Activated CD8-positive, alpha-beta T cell treated with anti-CD3 and anti-CD28 coated beads for 36 hours (primary cell): ENCODE measurements at regions of chr2 and their contacts with region 1.

Region 1: DNA sequence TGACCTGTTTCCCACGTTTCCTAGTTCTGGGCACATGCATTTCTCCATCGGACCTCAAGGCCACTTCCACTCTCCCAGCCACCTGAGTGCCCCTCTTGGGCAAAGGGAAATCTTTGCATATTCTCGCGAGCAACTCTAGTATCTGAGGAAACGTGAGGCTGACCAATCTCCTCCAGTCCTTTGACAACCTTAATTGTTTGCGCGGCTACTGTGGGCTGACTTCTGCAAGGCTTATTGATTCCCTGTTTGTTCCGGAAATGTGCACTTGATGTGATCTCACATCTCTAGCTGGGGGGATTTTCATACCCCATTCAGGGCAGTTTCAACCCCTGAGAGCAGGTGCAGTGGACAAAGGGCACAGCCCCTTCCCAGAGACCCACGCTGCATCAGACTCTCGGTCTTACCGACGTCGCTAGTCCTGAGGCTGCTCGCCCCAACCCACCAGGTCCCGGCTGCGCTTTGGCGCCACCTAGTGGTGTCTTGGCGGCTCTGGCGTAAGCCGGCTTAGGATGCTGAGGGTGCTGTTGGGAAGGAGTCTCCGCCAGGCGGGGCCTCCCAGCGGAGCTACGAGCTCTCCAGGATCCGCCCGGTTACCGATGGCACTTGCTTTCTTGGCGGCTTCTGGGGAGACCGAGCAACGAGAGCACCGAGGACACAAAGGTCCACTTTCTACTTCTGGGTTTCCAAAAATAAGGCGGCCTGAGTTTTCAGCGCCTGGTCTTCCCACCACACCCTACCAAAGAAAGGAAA is 24.8 kb upstream of the SPR start:
- DNase-seq: peak; percentile 89
- ATAC-seq: peak; percentile 92
- H3K4me3 Mint-ChIP-seq: peak overlapping the region; percentile 51
- H3K27ac Mint-ChIP-seq: no peak overlapping the region
- H3K4me1 Mint-ChIP-seq: peaks cover 9% of the 10 kb centered on the region
- H3K27me3 Mint-ChIP-seq: peaks cover 51% of the 10 kb centered on the region
- CTCF ChIP-seq: peak; percentile 96

Region 2: GRCh38 chr2:72770879-72771461 is 91.4 kb before region 1 on chr2:
- CTCF ChIA-PET with region 1: interaction called, 59 read pairs
- POLR2A ChIA-PET with region 1: no interaction called
- intact Hi-C with region 1: loop called (anchors 1 kb)
- DNase-seq: peak; percentile 73
- ATAC-seq: peak; percentile 55
- H3K4me3 Mint-ChIP-seq: no peak overlapping the region
- H3K27ac Mint-ChIP-seq: no peak overlapping the region
- H3K4me1 Mint-ChIP-seq: no peaks in the 10 kb centered on the region
- H3K27me3 Mint-ChIP-seq: no peaks in the 10 kb centered on the region
- CTCF ChIP-seq: peak; percentile 86

Region 3: DNA sequence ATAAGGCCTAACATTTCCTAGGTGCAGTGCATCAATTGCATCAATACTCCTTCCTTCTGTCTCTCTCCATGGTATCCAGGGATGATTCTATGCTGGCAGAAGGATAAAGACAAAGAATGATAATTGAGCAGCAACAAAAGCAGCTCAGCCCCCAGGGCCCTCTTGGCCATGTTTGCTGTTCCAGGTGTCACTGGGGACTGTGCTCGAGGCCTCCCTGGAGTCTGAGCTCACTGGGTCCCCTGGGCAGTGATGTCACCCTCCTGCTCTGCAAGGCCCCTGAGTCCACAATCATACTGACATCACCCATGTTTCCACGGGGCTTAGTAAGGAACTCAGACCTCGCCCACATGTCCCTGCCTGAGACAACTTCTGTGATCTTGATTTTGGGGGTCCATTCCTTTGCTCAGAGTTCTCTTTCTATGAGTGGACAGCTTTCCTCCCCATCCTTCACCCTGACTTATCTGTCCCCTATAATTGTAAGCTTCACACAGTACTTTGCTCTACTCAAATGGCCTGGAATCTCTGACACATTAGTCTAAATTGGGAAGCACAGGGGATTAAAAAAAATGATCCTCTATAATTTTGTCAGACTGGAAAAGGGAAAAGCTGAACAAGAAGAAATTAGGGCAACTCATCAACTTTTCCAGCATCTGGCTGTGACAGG is 20.8 kb before region 1 on chr2:
- CTCF ChIA-PET with region 1: interaction called, 16 read pairs
- POLR2A ChIA-PET with region 1: no interaction called
- intact Hi-C with region 1: no loop called
- DNase-seq: no peak
- ATAC-seq: no peak
- H3K4me3 Mint-ChIP-seq: no peak overlapping the region
- H3K27ac Mint-ChIP-seq: no peak overlapping the region
- H3K4me1 Mint-ChIP-seq: no peaks in the 10 kb centered on the region
- H3K27me3 Mint-ChIP-seq: peaks cover 15% of the 10 kb centered on the region
- CTCF ChIP-seq: no peak

Region 4: GRCh38 chr2:72934683-72935610 is 72.5 kb after region 1 on chr2:
- CTCF ChIA-PET with region 1: no interaction called
- POLR2A ChIA-PET with region 1: no interaction called
- intact Hi-C with region 1: no loop called
- DNase-seq: peak; percentile 51
- ATAC-seq: no peak
- H3K4me3 Mint-ChIP-seq: no peak overlapping the region
- H3K27ac Mint-ChIP-seq: no peak overlapping the region
- H3K4me1 Mint-ChIP-seq: no peaks in the 10 kb centered on the region
- H3K27me3 Mint-ChIP-seq: peaks cover 5% of the 10 kb centered on the region
- CTCF ChIP-seq: no peak

Region 5: GRCh38 chr2:73028841-73029240 is 166.4 kb after region 1 on chr2:
- CTCF ChIA-PET with region 1: no interaction called
- POLR2A ChIA-PET with region 1: no interaction called
- intact Hi-C with region 1: no loop called
- DNase-seq: no peak
- ATAC-seq: no peak
- H3K4me3 Mint-ChIP-seq: no peak overlapping the region
- H3K27ac Mint-ChIP-seq: no peak overlapping the region
- H3K4me1 Mint-ChIP-seq: no peaks in the 10 kb centered on the region
- H3K27me3 Mint-ChIP-seq: no peaks in the 10 kb centered on the region
- CTCF ChIP-seq: no peak